Calu3 (cell line): ENCODE measurements at regions of chr22 and their contacts with region 1.

Region 1: GRCh38 chr22:37643225-37643847 is 3.9 kb downstream of the SH3BP1 start:
- DNase-seq: peak; percentile 92
- H3K4me3 Mint-ChIP-seq: no peak overlapping the region
- H3K27ac Mint-ChIP-seq: no peak overlapping the region
- H3K4me1 Mint-ChIP-seq: peaks cover 8% of the 10 kb centered on the region
- H3K27me3 Mint-ChIP-seq: no peaks in the 10 kb centered on the region
- CTCF ChIP-seq: peak; percentile 94

Region 2: DNA sequence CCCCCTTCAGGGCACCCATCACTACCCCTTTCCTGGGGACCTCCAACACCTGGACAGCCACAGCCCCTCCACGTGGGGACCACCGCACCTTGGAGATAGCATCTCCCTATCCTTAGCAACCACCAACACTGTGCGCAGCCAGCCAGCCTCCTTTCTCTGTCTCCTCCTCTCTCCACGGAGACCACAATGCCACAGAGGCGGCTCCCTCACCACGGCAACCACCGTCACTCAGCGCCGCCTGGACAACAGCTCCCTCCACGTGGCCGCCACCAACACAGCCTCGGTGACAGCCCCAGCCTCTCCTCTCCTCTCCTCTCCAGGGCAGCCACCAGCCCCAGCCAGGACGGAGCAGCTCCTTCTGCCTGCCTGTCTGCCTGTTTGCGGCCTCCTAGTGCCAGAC is 226.5 kb before region 1 on chr22:
- CTCF ChIA-PET with region 1: no interaction called
- intact Hi-C with region 1: no loop called
- DNase-seq: no peak
- H3K4me3 Mint-ChIP-seq: no peak overlapping the region
- H3K27ac Mint-ChIP-seq: no peak overlapping the region
- H3K4me1 Mint-ChIP-seq: peaks cover 25% of the 10 kb centered on the region
- H3K27me3 Mint-ChIP-seq: peaks cover 56% of the 10 kb centered on the region
- CTCF ChIP-seq: no peak

Region 3: GRCh38 chr22:37571258-37571991 is 71.9 kb before region 1 on chr22:
- CTCF ChIA-PET with region 1: no interaction called
- intact Hi-C with region 1: no loop called
- DNase-seq: peak; percentile 77
- H3K4me3 Mint-ChIP-seq: peak overlapping the region; percentile 6
- H3K27ac Mint-ChIP-seq: peak overlapping the region; percentile 99
- H3K4me1 Mint-ChIP-seq: peaks cover 56% of the 10 kb centered on the region
- H3K27me3 Mint-ChIP-seq: no peaks in the 10 kb centered on the region
- CTCF ChIP-seq: peak; percentile 34

Region 4: DNA sequence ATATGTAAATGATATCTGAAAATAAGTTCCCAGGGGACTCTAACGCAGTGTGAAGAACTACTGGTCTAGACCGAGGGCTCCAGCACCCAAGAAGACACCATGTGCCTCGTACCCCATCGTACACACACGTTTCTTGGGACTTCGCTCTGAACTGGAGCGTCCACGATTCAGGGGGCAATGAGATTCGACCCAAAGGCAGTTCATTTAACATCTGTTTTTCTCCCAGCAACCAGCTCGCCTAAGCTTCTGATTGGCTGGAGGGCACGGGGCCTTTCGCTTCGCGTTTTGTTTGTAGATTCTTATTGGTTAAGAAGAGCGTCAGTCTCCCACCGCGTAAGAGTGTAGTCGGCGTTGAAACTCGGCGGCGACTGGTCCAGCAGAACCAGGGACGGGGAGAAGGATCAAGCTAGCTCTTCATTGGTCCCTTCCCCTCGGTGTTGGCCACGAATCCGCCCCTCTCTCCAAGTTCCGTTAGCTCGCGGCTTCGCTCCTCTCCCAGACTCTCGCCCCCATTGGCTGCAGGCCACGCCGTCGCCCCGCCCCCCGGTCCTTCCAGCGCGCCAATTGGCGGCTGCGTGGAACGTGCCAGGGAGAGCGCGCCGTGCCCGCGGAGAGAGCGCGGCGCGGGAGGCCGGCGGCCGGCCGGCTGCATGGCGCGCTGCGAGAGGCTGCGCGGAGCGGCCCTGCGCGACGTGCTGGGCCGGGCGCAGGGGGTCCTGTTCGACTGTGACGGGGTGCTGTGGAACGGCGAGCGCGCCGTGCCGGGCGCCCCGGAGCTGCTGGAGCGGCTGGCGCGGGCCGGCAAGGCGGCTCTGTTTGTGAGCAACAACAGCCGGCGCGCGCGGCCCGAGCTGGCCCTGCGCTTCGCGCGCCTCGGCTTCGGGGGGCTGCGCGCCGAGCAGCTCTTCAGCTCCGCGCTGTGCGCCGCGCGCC is 15.1 kb after region 1 on chr22 and contains the start of gene PDXP:
- CTCF ChIA-PET with region 1: interaction called, 27 read pairs
- intact Hi-C with region 1: no loop called
- DNase-seq: peak; percentile 99
- H3K4me3 Mint-ChIP-seq: peak within 1 kb of the TSS; percentile 92
- H3K27ac Mint-ChIP-seq: peak within 1 kb of the TSS; percentile 92
- H3K4me1 Mint-ChIP-seq: peaks cover 40% of the 10 kb centered on the region
- H3K27me3 Mint-ChIP-seq: no peaks in the 10 kb centered on the region
- CTCF ChIP-seq: no peak
- total RNA-seq, gene PDXP: 18.4 and 21.4 TPM in 2 replicates

Region 5: DNA sequence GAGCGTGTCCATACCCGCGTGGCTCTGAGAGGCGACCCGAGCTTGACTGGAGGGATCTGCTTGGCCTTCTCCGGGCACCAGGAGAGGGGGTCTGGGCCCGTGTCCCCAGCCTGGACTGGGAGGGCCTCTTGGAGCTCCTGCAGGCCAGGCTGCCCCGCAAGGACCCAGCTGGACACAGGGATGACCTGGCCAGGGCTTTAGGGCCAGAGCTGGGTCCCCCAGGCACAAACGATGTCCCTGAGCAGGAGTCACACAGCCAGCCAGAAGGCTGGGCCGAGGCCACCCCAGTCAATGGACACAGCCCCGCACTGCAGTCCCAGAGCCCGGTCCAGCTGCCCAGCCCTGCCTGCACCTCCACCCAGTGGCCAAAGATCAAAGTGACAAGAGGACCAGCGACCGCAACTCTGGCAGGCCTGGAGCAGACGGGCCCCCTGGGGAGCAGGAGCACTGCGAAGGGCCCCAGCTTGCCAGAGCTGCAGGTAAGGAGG is 91.7 kb after region 1 on chr22:
- CTCF ChIA-PET with region 1: interaction called, 26 read pairs
- intact Hi-C with region 1: no loop called
- DNase-seq: peak; percentile 84
- H3K4me3 Mint-ChIP-seq: no peak overlapping the region
- H3K27ac Mint-ChIP-seq: no peak overlapping the region
- H3K4me1 Mint-ChIP-seq: peaks cover 31% of the 10 kb centered on the region
- H3K27me3 Mint-ChIP-seq: peaks cover 17% of the 10 kb centered on the region
- CTCF ChIP-seq: peak; percentile 52

Region 6: DNA sequence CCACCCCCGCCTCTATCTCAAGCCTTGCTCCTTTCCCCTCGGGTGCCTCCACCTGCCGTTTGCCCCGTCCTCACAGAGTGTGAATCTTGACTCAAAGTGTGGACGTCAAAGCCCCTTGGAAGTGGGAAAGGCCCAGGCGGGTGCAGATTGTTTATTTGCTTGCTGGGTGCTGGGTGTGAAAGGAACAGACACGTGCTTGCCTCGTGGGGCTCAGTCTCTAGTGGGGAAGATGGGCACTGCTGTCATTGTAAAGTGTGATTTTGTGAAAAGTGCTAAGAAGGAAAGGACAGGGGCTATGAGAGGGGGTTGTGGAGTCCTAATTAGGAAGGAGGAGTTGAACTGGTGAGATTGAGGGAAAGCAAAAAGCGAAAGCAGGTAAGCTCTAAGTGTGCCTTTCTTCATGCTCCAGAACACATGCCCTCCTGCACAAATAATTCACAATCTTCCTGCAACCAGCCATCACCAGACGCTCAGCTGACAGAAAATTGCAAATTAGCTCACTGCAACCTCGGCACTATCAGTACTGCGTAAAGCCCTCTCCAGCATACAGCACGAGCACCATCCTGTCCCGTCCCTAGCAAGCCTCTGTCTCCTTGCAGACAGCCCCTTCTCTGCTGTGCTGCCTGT is 154.7 kb after region 1 on chr22:
- CTCF ChIA-PET with region 1: no interaction called
- intact Hi-C with region 1: loop called (anchors 10 kb)
- DNase-seq: no peak
- H3K4me3 Mint-ChIP-seq: no peak overlapping the region
- H3K27ac Mint-ChIP-seq: no peak overlapping the region
- H3K4me1 Mint-ChIP-seq: peaks cover 6% of the 10 kb centered on the region
- H3K27me3 Mint-ChIP-seq: no peaks in the 10 kb centered on the region
- CTCF ChIP-seq: no peak

Region 7: DNA sequence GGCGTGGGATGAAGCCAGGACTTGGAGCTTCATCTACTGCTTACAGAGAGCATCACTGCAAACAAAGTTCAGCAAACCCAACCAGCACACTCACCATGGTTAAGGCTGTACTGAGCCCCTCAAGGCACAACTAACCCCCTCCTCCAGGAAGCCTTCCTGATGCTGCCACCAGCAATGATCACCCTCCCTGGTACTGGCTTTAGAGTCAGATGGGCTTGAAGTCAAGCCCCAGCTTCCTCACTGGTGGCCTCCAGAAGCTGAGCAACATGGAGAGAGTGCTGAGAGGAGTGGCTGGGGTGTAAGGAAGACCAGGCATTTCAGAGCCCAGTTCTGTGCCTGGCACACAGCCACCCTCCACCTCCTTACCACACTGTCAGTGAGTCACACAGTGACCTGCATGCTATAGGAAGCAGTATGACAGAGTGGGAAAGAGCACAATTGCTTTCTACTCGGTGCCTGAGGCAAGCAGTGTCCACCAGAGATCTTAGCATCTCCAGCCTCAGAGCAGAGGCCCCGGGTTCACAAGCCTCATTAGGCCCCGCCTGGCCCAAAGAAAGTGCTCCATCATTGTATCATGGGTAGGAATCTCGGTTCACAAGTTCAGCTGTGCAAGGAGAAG is 491.9 kb after region 1 on chr22:
- CTCF ChIA-PET with region 1: no interaction called
- intact Hi-C with region 1: no loop called
- DNase-seq: peak; percentile 75
- H3K4me3 Mint-ChIP-seq: peak overlapping the region; percentile 3
- H3K27ac Mint-ChIP-seq: peak overlapping the region; percentile 27
- H3K4me1 Mint-ChIP-seq: peaks cover 13% of the 10 kb centered on the region
- H3K27me3 Mint-ChIP-seq: no peaks in the 10 kb centered on the region
- CTCF ChIP-seq: no peak